ENCODE measurements at regions of chr12 and their contacts with region 1.

Region 1: GRCh38 chr12:47021298-47021697 is 58.1 kb upstream of the PCED1B start:
- DNase-seq: peak in 2 of 4 donors; percentile 35 to 48
- ATAC-seq: peak; percentile 76
- H3K4me3 ChIP-seq: no peak overlapping the region
- H3K27ac ChIP-seq: no peak overlapping the region
- H3K4me1 ChIP-seq: no peaks in the 10 kb centered on the region
- H3K27me3 ChIP-seq: no peaks in the 10 kb centered on the region
- CTCF ChIP-seq: peak; percentile 54 to 74

Region 2: GRCh38 chr12:46342562-46343033 is 678.7 kb before region 1 on chr12:
- intact Hi-C with region 1: loop called in 1 of 2 experiments (anchors 10 kb)
- DNase-seq: peak in 1 of 4 donors; percentile 48
- ATAC-seq: peak; percentile 76
- H3K4me3 ChIP-seq: no peak overlapping the region
- H3K27ac ChIP-seq: no peak overlapping the region
- H3K4me1 ChIP-seq: no peaks in the 10 kb centered on the region
- H3K27me3 ChIP-seq: no peaks in the 10 kb centered on the region
- CTCF ChIP-seq: peak; percentile 47 to 49

Measured in left lung (tissue), 14 donors.